Posterior cingulate gyrus (tissue), 11 donors: ENCODE measurements at regions of chr12 and their contacts with region 1.

Region 1: GRCh38 chr12:25864306-25865276 is 93.9 kb upstream of the RASSF8 start:
- DNase-seq: no peak

Region 2: GRCh38 chr12:25757037-25757665 is 107.4 kb before region 1 on chr12:
- intact Hi-C with region 1: loop called (anchors 5 kb)
- DNase-seq: peak in 1 of 10 donors; percentile 8